Endothelial cell of umbilical vein (primary cell): ENCODE measurements at regions of chr4 and their contacts with region 1.

Region 1: GRCh38 chr4:186137196-186137794 is 32.8 kb downstream of the FAM149A start:
- DNase-seq: peak; percentile 15
- H3K4me3 ChIP-seq: no peak overlapping the region
- H3K27ac ChIP-seq: no peak overlapping the region
- H3K4me1 ChIP-seq: no peaks in the 10 kb centered on the region
- H3K27me3 ChIP-seq: peaks cover 2 to 4% of the 10 kb centered on the region in 2 experiments
- CTCF ChIP-seq: peak; percentile 28 to 34
- POLR2A ChIP-seq: no peak

Region 2: DNA sequence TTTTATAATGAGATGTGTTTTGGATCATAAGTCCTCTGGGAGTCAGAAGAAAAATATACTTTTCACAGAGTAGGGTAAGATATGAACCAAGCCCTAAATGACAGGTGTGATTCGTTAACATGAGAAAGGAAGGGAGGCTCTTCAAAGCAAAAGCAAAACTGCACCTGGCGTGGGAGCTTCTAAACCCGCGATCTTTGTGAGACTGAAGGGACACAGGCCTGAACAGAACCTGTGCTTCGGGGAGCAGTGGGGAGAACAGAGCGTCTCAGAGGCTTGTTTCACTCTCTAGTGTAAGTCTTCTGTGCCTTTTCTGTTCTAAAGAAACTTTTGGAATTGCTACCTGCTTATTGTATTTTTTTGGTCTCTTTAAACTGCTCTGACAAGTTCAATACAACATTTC is 23.8 kb after region 1 on chr4:
- CTCF ChIA-PET with region 1: interaction called, 10 read pairs
- POLR2A ChIA-PET with region 1: no interaction called
- dilution Hi-C with region 1: no loop called
- intact Hi-C with region 1: no loop called
- DNase-seq: no peak
- H3K4me3 ChIP-seq: no peak overlapping the region
- H3K27ac ChIP-seq: no peak overlapping the region
- H3K4me1 ChIP-seq: no peaks in the 10 kb centered on the region
- H3K27me3 ChIP-seq: no peaks in the 10 kb centered on the region
- CTCF ChIP-seq: no peak
- POLR2A ChIP-seq: no peak